Left cardiac atrium (tissue), 4 donors: ENCODE measurements at regions of chr18 and their contacts with region 1.

Region 1: GRCh38 chr18:54119524-54120019 is 104.9 kb downstream of the MBD2 start:
- DNase-seq: no peak
- ATAC-seq: peak; percentile 73

Region 2: DNA sequence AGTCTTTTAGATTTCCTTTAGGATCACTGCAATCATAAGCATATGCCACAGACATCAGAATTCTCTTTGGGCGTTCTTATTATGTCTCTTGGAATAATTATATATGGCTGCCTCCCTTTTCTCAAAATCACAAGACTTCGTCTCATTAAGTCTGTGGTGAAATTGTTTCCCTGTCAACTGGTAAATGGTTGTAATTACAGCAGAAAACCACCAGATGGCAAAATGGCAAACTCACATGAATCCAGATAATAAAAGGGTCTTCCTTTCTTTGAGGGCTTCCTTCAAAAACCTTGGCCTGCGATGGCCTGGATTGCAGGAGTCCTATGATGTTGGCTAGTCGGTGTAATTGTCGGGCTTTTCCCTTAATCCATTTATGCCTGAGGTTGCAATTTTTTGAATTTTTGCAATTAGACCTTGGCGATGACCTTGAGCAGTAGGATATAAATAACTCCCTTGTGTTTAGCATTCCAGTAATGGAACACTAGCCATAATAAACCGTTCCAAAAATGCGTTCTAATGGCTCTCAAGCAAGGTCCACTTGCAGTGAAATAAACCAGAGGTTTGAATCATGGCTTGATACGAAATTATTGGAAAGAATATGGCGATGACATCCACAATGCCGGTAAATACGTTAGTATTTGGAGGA is 551.5 kb before region 1 on chr18:
- intact Hi-C with region 1: loop called (anchors 5 to 10 kb)
- DNase-seq: no peak
- ATAC-seq: peak in 1 of 2 donors; percentile 59

Region 3: GRCh38 chr18:54222922-54223567 is 103.5 kb after region 1 on chr18:
- intact Hi-C with region 1: no loop called
- DNase-seq: no peak
- ATAC-seq: no peak